ENCODE measurements at regions of chr12 and their contacts with region 1.

Region 1: DNA sequence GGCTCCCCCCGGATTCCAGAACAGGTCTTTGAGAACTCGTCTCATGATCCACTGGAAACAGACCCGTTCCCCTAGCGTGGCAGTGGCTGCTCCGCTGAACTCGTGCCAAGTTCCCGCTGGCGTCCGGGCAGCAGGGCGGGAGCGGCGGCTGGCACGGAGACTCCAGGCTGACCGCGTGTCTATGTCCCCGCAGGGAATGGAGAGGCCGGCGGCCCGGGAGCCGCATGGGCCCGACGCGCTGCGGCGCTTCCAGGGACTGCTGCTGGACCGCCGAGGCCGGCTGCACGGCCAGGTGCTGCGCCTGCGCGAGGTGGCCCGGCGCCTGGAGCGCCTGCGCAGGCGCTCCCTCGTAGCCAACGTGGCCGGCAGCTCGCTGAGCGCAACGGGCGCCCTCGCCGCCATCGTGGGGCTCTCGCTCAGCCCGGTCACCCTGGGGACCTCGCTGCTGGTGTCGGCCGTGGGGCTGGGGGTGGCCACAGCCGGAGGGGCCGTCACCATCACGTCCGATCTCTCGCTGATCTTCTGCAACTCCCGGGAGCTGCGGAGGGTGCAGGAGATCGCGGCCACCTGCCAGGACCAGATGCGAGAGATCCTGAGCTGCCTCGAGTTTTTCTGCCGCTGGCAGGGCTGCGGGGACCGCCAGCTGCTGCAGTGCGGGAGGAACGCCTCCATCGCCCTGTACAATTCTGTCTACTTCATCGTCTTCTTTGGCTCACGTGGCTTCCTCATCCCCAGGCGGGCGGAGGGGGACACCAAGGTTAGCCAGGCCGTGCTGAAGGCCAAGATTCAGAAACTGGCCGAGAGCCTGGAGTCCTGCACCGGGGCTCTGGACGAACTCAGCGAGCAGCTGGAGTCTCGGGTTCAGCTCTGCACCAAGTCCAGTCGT is 1.5 kb downstream of the APOLD1 start:
- DNase-seq: peak; percentile 90

Region 2: GRCh38 chr12:12807970-12808702 is 21.2 kb after region 1 on chr12:
- intact Hi-C with region 1: loop called (anchors 1 kb)
- DNase-seq: peak; percentile 77

Region 3: GRCh38 chr12:13165617-13166041 is 378.7 kb after region 1 on chr12:
- intact Hi-C with region 1: no loop called
- DNase-seq: peak; percentile 87

Measured in cardiac septum (tissue), 1 donor.